ENCODE measurements at regions of chr2 and their contacts with region 1.

Region 1: DNA sequence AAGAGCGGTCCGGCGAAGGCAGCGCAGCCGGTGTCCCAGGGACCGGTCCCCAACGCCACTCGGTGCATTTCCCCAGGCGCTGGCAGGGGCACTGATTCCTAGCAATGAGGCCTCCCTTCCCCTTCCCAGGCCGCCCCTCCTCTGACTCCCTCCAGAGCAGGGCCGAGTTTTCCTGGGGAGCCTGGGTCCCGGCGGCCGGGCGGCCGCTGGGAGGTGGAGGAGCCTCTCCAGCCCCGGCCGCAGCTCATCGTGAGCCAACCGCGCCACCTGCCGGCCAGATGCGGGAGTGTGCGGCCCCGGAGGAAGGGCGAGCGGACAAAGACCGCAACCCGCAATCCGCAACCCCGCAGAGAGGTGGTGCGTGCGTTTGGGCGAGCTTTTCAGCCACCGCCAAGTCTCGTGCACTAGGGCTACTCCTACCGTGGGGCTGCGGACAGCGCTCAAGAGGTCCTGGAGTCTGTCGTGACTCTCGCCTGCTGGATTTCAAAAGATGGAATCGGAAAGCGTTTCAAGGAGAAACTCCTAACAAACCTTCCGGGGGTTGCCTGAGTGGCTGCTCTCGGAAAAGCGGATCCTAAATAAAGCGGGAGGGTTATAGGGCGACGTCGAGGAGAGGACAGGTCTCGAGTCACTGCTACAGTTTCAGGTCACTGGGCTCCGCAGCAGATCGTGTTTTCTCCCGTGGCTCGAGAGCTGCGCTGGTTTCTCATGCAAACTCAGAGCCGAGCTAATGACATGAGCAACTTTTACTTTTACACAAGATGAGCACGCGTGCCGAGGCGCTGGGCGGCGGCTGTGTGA is 1.5 kb upstream of the EPHA4 start:
- DNase-seq: peak; percentile 73 to 84 (median 74)
- H3K4me3 ChIP-seq: peak overlapping the region; percentile 69 to 90
- H3K4me3 Mint-ChIP-seq: peak overlapping the region; percentile 77 to 93 (median 86)
- H3K27ac ChIP-seq: peak overlapping the region; percentile 79
- H3K27ac Mint-ChIP-seq: peak overlapping the region in 6 of 7 donors; percentile 24 to 93 (median 74)
- H3K4me1 ChIP-seq: peaks cover 32% of the 10 kb centered on the region
- H3K4me1 Mint-ChIP-seq: peaks cover 23 to 40% (median 31%) of the 10 kb centered on the region in 4 donors
- H3K27me3 ChIP-seq: peaks cover 6% of the 10 kb centered on the region
- H3K27me3 Mint-ChIP-seq: peaks cover 24 to 31% of the 10 kb centered on the region in 2 donors

Region 2: DNA sequence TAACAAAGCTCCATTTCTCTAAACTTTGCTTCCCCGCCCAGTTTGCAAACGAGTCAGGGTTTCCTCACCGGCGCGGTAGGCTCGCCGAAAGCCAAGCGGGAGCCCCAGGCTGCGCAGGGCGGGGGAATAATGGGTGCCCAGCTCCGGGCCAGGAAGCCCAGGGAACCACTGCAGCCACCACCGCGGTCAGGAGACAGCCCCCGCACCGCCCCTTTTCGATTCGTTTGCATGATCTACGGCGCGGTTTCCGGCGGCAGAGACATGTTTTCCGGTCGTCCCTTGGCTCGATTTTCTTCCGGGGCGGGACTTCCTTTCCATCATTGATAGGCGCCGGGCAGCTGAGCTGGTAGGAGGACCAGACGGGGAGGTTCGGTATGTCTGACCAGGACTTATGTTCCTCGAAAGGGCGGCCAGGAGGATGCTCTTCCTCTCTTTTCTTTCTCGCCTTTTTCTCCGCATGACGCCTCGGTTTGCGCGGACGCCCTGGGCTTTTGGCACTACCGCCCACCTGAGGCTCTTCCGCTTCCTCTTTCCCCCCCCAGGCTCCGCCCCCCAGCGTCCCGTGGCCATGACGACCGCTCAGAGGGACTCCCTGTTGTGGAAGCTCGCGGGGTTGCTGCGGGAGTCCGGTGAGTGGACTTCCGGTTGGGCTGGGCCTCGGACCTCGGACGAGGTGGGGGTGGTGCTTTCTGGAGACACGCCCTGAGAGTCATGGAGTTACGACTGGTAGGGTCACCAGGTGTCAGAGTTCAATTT is 1975.9 kb before region 1 on chr2 and contains the start of gene STK11IP:
- CTCF ChIA-PET with region 1: no interaction called
- POLR2A ChIA-PET with region 1: no interaction called
- intact Hi-C with region 1: loop called (anchors 5 kb)
- DNase-seq: peak; percentile 87 to 93 (median 88)
- H3K4me3 ChIP-seq: peak within 1 kb of the TSS; percentile 62 to 100
- H3K4me3 Mint-ChIP-seq: peak within 1 kb of the TSS; percentile 90 to 97 (median 96)
- H3K27ac ChIP-seq: peak within 1 kb of the TSS; percentile 72
- H3K27ac Mint-ChIP-seq: peak within 1 kb of the TSS; percentile 90 to 99 (median 97)
- H3K4me1 ChIP-seq: peaks cover 14% of the 10 kb centered on the region
- H3K4me1 Mint-ChIP-seq: peaks cover 10 to 24% (median 17%) of the 10 kb centered on the region in 4 donors
- H3K27me3 ChIP-seq: no peaks in the 10 kb centered on the region
- H3K27me3 Mint-ChIP-seq: peaks cover 3 to 7% of the 10 kb centered on the region in 2 donors
- total RNA-seq, gene STK11IP: 48.7 to 50.2 TPM

Region 3: GRCh38 chr2:220880623-220881596 is 692.7 kb before region 1 on chr2:
- CTCF ChIA-PET with region 1: no interaction called
- POLR2A ChIA-PET with region 1: interaction called, 3 read pairs
- intact Hi-C with region 1: loop called (anchors 10 kb)
- DNase-seq: no peak
- H3K4me3 ChIP-seq: no peak overlapping the region
- H3K4me3 Mint-ChIP-seq: no peak overlapping the region
- H3K27ac ChIP-seq: no peak overlapping the region
- H3K27ac Mint-ChIP-seq: no peak overlapping the region
- H3K4me1 ChIP-seq: no peaks in the 10 kb centered on the region
- H3K4me1 Mint-ChIP-seq: peaks cover 0 to 2% (median 0%) of the 10 kb centered on the region in 4 donors
- H3K27me3 ChIP-seq: no peaks in the 10 kb centered on the region
- H3K27me3 Mint-ChIP-seq: peaks cover 0 to 2% of the 10 kb centered on the region in 2 donors

Region 4: GRCh38 chr2:221304916-221305315 is 268.7 kb before region 1 on chr2:
- CTCF ChIA-PET with region 1: interaction called, 5 read pairs
- POLR2A ChIA-PET with region 1: no interaction called
- intact Hi-C with region 1: loop called (anchors 1 kb)
- DNase-seq: no peak
- H3K4me3 ChIP-seq: no peak overlapping the region
- H3K4me3 Mint-ChIP-seq: no peak overlapping the region
- H3K27ac ChIP-seq: no peak overlapping the region
- H3K27ac Mint-ChIP-seq: no peak overlapping the region
- H3K4me1 ChIP-seq: no peaks in the 10 kb centered on the region
- H3K4me1 Mint-ChIP-seq: no peaks in the 10 kb centered on the region
- H3K27me3 ChIP-seq: no peaks in the 10 kb centered on the region
- H3K27me3 Mint-ChIP-seq: peaks cover 0 to 2% of the 10 kb centered on the region in 2 donors

Region 5: GRCh38 chr2:221502270-221503010 is 71.2 kb before region 1 on chr2:
- CTCF ChIA-PET with region 1: interaction called, 46 read pairs
- POLR2A ChIA-PET with region 1: interaction called, 13 read pairs
- intact Hi-C with region 1: loop called (anchors 1 kb)
- DNase-seq: no peak
- H3K4me3 ChIP-seq: no peak overlapping the region
- H3K4me3 Mint-ChIP-seq: peak overlapping the region in 1 of 8 donors; percentile 37
- H3K27ac ChIP-seq: no peak overlapping the region
- H3K27ac Mint-ChIP-seq: peak overlapping the region in 5 of 7 donors; percentile 1 to 39 (median 13)
- H3K4me1 ChIP-seq: peaks cover 22% of the 10 kb centered on the region
- H3K4me1 Mint-ChIP-seq: peaks cover 28 to 59% (median 45%) of the 10 kb centered on the region in 4 donors
- H3K27me3 ChIP-seq: no peaks in the 10 kb centered on the region
- H3K27me3 Mint-ChIP-seq: no peaks in the 10 kb centered on the region

Region 6: GRCh38 chr2:221554769-221555493 is 18.7 kb before region 1 on chr2:
- CTCF ChIA-PET with region 1: interaction called, 17 read pairs
- POLR2A ChIA-PET with region 1: interaction called, 4 read pairs
- intact Hi-C with region 1: no loop called
- DNase-seq: peak in 1 of 5 donors; percentile 15
- H3K4me3 ChIP-seq: no peak overlapping the region
- H3K4me3 Mint-ChIP-seq: peak overlapping the region in 7 of 8 donors; percentile 71 to 85 (median 80)
- H3K27ac ChIP-seq: no peak overlapping the region
- H3K27ac Mint-ChIP-seq: peak overlapping the region; percentile 63 to 88 (median 77)
- H3K4me1 ChIP-seq: peaks cover 39% of the 10 kb centered on the region
- H3K4me1 Mint-ChIP-seq: peaks cover 53 to 77% (median 64%) of the 10 kb centered on the region in 4 donors
- H3K27me3 ChIP-seq: no peaks in the 10 kb centered on the region
- H3K27me3 Mint-ChIP-seq: no peaks in the 10 kb centered on the region

Region 7: GRCh38 chr2:221969087-221969829 is 395.6 kb after region 1 on chr2:
- CTCF ChIA-PET with region 1: no interaction called
- POLR2A ChIA-PET with region 1: no interaction called
- intact Hi-C with region 1: no loop called
- DNase-seq: peak in 4 of 5 donors; percentile 2 to 20 (median 12)
- H3K4me3 ChIP-seq: no peak overlapping the region
- H3K4me3 Mint-ChIP-seq: no peak overlapping the region
- H3K27ac ChIP-seq: no peak overlapping the region
- H3K27ac Mint-ChIP-seq: no peak overlapping the region
- H3K4me1 ChIP-seq: no peaks in the 10 kb centered on the region
- H3K4me1 Mint-ChIP-seq: no peaks in the 10 kb centered on the region
- H3K27me3 ChIP-seq: no peaks in the 10 kb centered on the region
- H3K27me3 Mint-ChIP-seq: peaks cover 3 to 8% of the 10 kb centered on the region in 2 donors